Heart left ventricle (tissue), 16 donors: ENCODE measurements at regions of chr15 and their contacts with region 1.

Region 1: GRCh38 chr15:100565591-100565990 is 36.4 kb downstream of the LINS1 start:
- DNase-seq: no peak
- ATAC-seq: no peak
- H3K4me3 ChIP-seq: no peak overlapping the region
- H3K27ac ChIP-seq: no peak overlapping the region
- H3K4me1 ChIP-seq: no peaks in the 10 kb centered on the region
- H3K27me3 ChIP-seq: no peaks in the 10 kb centered on the region
- CTCF ChIP-seq: no peak
- POLR2A ChIP-seq: no peak

Region 2: DNA sequence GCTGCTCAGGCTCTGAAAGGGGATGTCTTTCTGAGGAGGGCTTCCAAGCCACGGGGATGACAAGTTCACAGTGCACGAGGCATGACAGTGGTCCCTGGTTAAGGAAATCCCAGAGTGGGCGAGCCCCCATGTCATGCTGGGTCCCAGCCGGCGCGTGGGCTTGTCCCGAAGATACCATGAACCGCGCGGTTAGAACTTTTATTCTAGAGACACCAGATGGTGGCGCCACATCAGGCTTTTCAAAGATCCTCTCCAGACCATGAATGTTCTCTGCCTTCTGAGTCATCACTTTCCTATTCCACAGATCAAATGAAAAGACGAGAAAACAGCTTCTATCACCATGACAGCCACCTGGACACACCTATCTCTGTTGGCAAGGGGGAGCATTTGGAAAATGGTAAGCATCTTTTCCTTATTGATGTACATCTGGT is 604.6 kb before region 1 on chr15:
- intact Hi-C with region 1: no loop called
- DNase-seq: peak in 2 of 5 donors; percentile 29 to 42
- ATAC-seq: peak in 3 of 4 donors; percentile 62 to 75 (median 68)
- H3K4me3 ChIP-seq: no peak overlapping the region
- H3K27ac ChIP-seq: no peak overlapping the region
- H3K4me1 ChIP-seq: no peaks in the 10 kb centered on the region
- H3K27me3 ChIP-seq: peaks cover 0 to 8% (median 0%) of the 10 kb centered on the region in 9 donors
- CTCF ChIP-seq: peak in 10 of 12 donors; percentile 19 to 62 (median 47)
- POLR2A ChIP-seq: no peak

Region 3: GRCh38 chr15:100279446-100279845 is 286.1 kb before region 1 on chr15:
- intact Hi-C with region 1: no loop called
- DNase-seq: no peak
- ATAC-seq: peak; percentile 42 to 77 (median 55)
- H3K4me3 ChIP-seq: no peak overlapping the region
- H3K27ac ChIP-seq: no peak overlapping the region
- H3K4me1 ChIP-seq: peaks cover 0 to 12% (median 0%) of the 10 kb centered on the region in 12 donors
- H3K27me3 ChIP-seq: peaks cover 0 to 2% (median 0%) of the 10 kb centered on the region in 9 donors
- CTCF ChIP-seq: no peak
- POLR2A ChIP-seq: no peak

Region 4: GRCh38 chr15:100438570-100438969 is 127.0 kb before region 1 on chr15:
- intact Hi-C with region 1: loop called in 1 of 10 experiments (anchors 10 kb)
- DNase-seq: peak; percentile 63 to 88 (median 76)
- ATAC-seq: peak in 2 of 4 donors; percentile 26 to 59
- H3K4me3 ChIP-seq: no peak overlapping the region
- H3K27ac ChIP-seq: no peak overlapping the region
- H3K4me1 ChIP-seq: peaks cover 0 to 8% (median 2%) of the 10 kb centered on the region in 12 donors
- H3K27me3 ChIP-seq: no peaks in the 10 kb centered on the region
- CTCF ChIP-seq: no peak
- POLR2A ChIP-seq: no peak